Activated CD4-positive, alpha-beta T cell treated with anti-CD3 and anti-CD28 coated beads, Interleukin-2, amount 10 ng/mL, durations not matched to agents 7 days and 5 days (primary cell): ENCODE measurements at regions of chr1 and their contacts with region 1.

Region 1: DNA sequence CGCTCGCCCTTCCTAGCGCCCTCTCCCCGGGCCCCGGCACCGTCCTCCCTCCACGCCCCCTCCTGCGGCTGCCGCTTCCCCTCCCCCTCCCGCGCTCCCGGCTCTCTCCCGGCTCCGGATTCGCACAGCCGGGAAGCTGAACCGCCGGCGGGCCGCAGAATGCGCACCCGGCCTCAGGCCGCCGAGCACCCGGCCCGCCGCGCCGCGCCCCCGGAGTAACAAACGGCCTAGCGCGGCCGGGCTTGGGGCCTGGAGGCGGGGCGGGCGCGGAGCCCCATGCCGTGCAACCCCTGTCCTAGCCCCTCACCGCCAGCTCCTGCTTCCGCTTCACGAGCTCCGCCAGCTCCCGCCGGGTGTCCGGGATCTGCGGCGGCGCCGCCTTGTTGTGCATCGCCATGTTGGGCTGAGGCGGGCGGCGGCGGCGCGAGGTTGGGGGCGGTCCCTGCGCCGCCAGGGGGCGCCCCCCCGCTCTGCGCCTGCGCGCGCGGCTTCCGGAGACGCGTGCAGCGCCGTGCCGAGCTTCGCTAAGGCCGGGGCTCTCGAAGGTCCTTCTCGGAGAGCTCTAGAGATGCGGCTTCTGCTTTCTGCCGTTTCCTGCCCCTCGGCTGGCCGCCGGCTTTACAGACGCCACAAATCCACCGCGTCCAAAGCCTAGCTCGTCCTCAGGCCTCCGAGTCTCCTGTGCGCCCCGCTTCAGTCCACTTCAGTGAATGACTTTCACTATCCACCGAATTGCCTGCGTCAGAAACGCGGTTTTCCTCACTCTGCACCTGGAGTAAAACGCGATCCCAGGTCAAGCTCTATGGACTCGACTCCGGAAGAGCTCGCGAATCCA is at the start of gene MEAF6:
- DNase-seq: peak; percentile 86
- H3K4me3 Mint-ChIP-seq: peak within 1 kb of the TSS; percentile 95
- H3K27ac Mint-ChIP-seq: peak within 1 kb of the TSS; percentile 94
- H3K4me1 Mint-ChIP-seq: peaks cover 41% of the 10 kb centered on the region
- H3K27me3 Mint-ChIP-seq: no peaks in the 10 kb centered on the region
- total RNA-seq, gene MEAF6: 68.8 to 75.6 TPM

Region 2: DNA sequence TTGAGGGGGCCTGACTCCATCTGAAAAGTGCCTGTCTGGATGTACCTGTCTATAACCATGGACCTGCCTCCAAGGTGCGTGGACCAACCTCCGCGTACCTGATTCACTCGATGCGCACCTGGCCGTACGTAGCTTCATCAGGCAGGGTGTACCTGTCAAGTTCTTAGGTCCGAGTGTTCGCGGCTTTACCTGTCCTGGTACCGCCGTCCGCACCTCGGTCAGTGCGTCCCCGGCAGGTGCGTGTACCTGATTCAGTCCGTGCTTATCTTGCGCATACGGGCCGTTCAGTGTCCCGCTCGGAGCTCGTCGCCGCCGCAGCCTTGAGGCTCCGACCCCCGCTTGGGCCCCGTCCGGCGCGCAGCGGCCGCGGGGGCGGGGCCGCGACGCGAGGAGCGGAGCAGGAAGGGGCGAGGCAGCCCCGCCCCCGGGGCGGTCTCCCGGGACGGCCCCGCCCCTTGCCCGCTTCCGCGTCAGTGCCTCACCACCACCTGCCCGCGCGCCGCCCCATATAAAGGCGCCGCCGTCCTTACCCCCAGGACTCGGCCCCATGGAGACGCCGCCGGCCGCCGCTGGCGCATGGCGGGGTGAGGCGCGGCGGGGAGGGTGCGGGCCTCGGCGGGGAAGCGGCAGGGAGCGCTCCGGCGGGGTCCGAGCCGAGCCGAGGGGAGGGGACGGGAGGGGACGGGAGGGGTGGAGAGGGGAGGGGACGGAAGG is 40.4 kb before region 1 on chr1 and contains the start of gene ZC3H12A:
- CTCF ChIA-PET with region 1: interaction called, 10 read pairs
- POLR2A ChIA-PET with region 1: interaction called, 3 read pairs
- DNase-seq: peak; percentile 90
- H3K4me3 Mint-ChIP-seq: peak within 1 kb of the TSS; percentile 94
- H3K27ac Mint-ChIP-seq: peak within 1 kb of the TSS; percentile 98
- H3K4me1 Mint-ChIP-seq: peaks cover 64% of the 10 kb centered on the region
- H3K27me3 Mint-ChIP-seq: no peaks in the 10 kb centered on the region
- total RNA-seq, gene ZC3H12A: 16.8 to 21.9 TPM

Region 3: GRCh38 chr1:37486680-37487618 is 27.6 kb before region 1 on chr1:
- CTCF ChIA-PET with region 1: interaction called, 26 read pairs
- POLR2A ChIA-PET with region 1: no interaction called
- DNase-seq: peak; percentile 73
- H3K4me3 Mint-ChIP-seq: no peak overlapping the region
- H3K27ac Mint-ChIP-seq: peak overlapping the region; percentile 73
- H3K4me1 Mint-ChIP-seq: peaks cover 10% of the 10 kb centered on the region
- H3K27me3 Mint-ChIP-seq: no peaks in the 10 kb centered on the region

Region 4: GRCh38 chr1:37498872-37499617 is 15.5 kb before region 1 on chr1:
- CTCF ChIA-PET with region 1: interaction called, 10 read pairs
- POLR2A ChIA-PET with region 1: no interaction called
- DNase-seq: no peak
- H3K4me3 Mint-ChIP-seq: no peak overlapping the region
- H3K27ac Mint-ChIP-seq: no peak overlapping the region
- H3K4me1 Mint-ChIP-seq: no peaks in the 10 kb centered on the region
- H3K27me3 Mint-ChIP-seq: no peaks in the 10 kb centered on the region

Region 5: DNA sequence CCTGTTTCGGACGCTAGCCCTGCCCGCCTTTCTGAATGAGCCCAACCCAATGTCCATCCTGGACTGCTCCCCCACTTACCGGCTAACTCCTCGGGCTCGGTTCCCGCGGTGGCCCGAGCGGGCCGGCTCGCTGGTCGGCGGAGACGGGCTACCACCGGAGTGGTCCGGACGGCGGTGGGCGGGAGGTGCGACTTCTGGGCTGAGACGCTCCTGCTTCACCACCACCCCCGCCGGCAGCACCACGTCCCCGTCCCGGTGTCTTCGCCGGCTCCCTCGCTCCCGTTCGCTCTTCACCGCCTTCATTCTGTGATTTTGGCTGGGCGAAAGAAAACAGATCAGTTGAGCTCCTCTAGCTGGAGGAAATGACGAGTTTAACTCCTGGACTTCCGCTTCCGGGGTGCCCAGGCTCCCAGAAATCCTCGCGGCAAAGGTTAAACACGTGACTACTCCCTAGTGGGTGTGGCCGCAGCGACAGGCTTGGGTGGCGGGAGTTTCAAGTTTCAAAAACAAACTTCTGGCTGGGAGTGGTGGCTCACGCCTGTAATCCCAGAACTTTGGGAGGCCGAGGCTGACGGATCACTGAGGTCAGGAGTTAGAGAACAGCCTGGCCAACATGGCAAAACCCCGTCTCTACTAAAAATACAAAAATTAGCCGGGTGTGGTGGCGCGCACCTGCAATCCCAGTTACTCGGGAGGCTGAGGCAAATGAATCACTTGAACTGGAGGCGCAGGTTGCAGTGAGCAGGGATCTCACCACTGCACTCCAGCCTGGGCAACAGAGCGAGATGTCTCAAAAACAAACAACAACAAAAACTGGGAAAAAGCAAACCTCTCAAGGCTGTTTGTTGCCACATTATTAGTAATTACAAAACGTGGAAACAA is 39.6 kb after region 1 on chr1 and contains the start of gene SNIP1:
- CTCF ChIA-PET with region 1: interaction called, 10 read pairs
- POLR2A ChIA-PET with region 1: interaction called, 3 read pairs
- DNase-seq: peak; percentile 95
- H3K4me3 Mint-ChIP-seq: peak within 1 kb of the TSS; percentile 97
- H3K27ac Mint-ChIP-seq: peak within 1 kb of the TSS; percentile 98
- H3K4me1 Mint-ChIP-seq: peaks cover 62% of the 10 kb centered on the region
- H3K27me3 Mint-ChIP-seq: no peaks in the 10 kb centered on the region
- total RNA-seq, gene SNIP1: 27.0 to 27.6 TPM